PC-9 (cell line): ENCODE measurements at regions of chr7 and their contacts with region 1.

Region 1: GRCh38 chr7:76069238-76069638 is 21.3 kb downstream of the MDH2 start:
- DNase-seq: peak; percentile 81 to 93
- H3K4me3 ChIP-seq: no peak overlapping the region
- H3K27ac ChIP-seq: no peak overlapping the region
- H3K4me1 ChIP-seq: peaks cover 11% of the 10 kb centered on the region
- H3K27me3 ChIP-seq: no peaks in the 10 kb centered on the region
- CTCF ChIP-seq: peak; percentile 70

Region 2: DNA sequence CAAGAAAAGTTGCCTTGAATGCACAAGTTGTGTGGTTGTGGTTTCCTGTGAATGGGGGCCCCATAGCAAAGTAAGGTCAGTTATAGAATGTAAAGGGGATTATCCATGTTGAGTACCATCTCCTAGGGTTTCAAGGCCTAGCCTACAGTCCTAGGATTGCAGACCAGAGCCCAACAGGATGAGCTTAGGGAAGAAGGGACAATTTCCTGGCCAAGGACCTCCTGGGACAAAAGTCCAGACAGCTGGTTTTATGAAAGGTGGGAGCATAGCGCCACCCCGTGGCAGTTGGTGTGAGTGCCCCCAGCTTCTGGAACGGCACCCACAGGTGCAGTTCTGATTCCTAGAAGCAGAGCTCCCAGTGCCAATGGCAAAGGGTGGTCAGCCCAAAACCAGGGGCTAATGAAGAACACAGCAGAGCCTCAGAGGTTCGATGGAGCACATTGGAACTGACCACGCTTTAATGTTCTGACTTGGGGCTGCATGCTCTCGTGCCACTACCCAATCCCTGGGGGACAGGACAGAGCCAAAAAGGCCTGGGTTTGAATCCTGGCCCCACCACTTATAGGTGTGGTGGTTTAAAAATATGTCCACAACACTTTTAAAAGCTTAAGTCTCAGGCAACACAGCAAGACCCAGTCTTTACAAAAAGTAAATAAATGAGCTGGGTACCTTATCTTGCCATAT is 49.1 kb before region 1 on chr7:
- CTCF ChIA-PET with region 1: interaction called, 13 read pairs
- POLR2A ChIA-PET with region 1: no interaction called
- intact Hi-C with region 1: no loop called
- DNase-seq: peak; percentile 51 to 78
- H3K4me3 ChIP-seq: no peak overlapping the region
- H3K27ac ChIP-seq: no peak overlapping the region
- H3K4me1 ChIP-seq: no peaks in the 10 kb centered on the region
- H3K27me3 ChIP-seq: no peaks in the 10 kb centered on the region
- CTCF ChIP-seq: peak; percentile 88

Region 3: GRCh38 chr7:76086070-76086469 is 16.8 kb after region 1 on chr7:
- CTCF ChIA-PET with region 1: interaction called, 3 read pairs
- POLR2A ChIA-PET with region 1: interaction called, 8 read pairs
- intact Hi-C with region 1: loop called (anchors 1 kb)
- DNase-seq: peak in 1 of 2 experiments; percentile 51
- H3K4me3 ChIP-seq: no peak overlapping the region
- H3K27ac ChIP-seq: peak overlapping the region; percentile 96
- H3K4me1 ChIP-seq: peaks cover 88% of the 10 kb centered on the region
- H3K27me3 ChIP-seq: no peaks in the 10 kb centered on the region
- CTCF ChIP-seq: no peak

Region 4: GRCh38 chr7:76133164-76133775 is 64.0 kb after region 1 on chr7:
- CTCF ChIA-PET with region 1: interaction called, 10 read pairs
- POLR2A ChIA-PET with region 1: interaction called, 4 read pairs
- intact Hi-C with region 1: loop called (anchors 1 kb)
- DNase-seq: no peak
- H3K4me3 ChIP-seq: no peak overlapping the region
- H3K27ac ChIP-seq: no peak overlapping the region
- H3K4me1 ChIP-seq: no peaks in the 10 kb centered on the region
- H3K27me3 ChIP-seq: no peaks in the 10 kb centered on the region
- CTCF ChIP-seq: no peak

Region 5: DNA sequence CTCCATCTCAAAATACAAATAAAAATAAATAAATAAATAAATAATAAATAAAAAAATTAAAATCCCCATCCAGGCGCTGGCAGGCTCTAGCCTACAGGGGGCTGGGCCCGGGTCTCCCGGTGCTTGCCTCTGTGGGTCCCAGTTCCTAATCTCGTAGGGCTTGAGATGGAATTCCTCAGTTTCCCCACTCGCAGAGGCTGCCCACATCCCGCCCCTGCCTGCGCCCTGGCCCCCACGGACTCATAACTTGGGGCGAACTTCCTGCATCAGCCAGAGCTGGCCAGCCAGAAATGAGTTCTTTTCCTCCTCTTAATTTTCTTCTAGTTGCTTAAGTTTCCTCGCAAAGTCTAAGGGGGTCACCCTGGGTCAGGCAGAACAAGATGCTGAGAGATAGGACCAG is 110.4 kb after region 1 on chr7:
- CTCF ChIA-PET with region 1: no interaction called
- POLR2A ChIA-PET with region 1: no interaction called
- intact Hi-C with region 1: loop called (anchors 1 kb)
- DNase-seq: no peak
- H3K4me3 ChIP-seq: no peak overlapping the region
- H3K27ac ChIP-seq: no peak overlapping the region
- H3K4me1 ChIP-seq: no peaks in the 10 kb centered on the region
- H3K27me3 ChIP-seq: no peaks in the 10 kb centered on the region
- CTCF ChIP-seq: no peak